ENCODE measurements at regions of chr20 and their contacts with region 1.

Region 1: GRCh38 chr20:54475334-54476168 is at the start of gene DOK5:
- DNase-seq: peak; percentile 29
- H3K4me3 ChIP-seq: peak within 1 kb of the TSS; percentile 51 to 75 (median 62)
- H3K27ac ChIP-seq: no peak within 1 kb of the TSS
- H3K4me1 ChIP-seq: peaks cover 9% of the 10 kb centered on the region
- H3K27me3 ChIP-seq: peaks cover 4 to 17% of the 10 kb centered on the region in 2 experiments
- CTCF ChIP-seq: no peak
- POLR2A ChIP-seq: no peak
- total RNA-seq, gene DOK5: 5.7 and 14.2 TPM in 2 replicates

Region 2: GRCh38 chr20:54557806-54558590 is 82.4 kb after region 1 on chr20:
- CTCF ChIA-PET with region 1: no interaction called
- POLR2A ChIA-PET with region 1: no interaction called
- dilution Hi-C with region 1: no loop called
- intact Hi-C with region 1: loop called (anchors 1 kb)
- DNase-seq: peak; percentile 47
- H3K4me3 ChIP-seq: peak overlapping the region in 1 of 3 experiments; percentile 36
- H3K27ac ChIP-seq: peak overlapping the region; percentile 59
- H3K4me1 ChIP-seq: peaks cover 37% of the 10 kb centered on the region
- H3K27me3 ChIP-seq: no peaks in the 10 kb centered on the region
- CTCF ChIP-seq: no peak
- POLR2A ChIP-seq: no peak

Measured in endothelial cell of umbilical vein (primary cell).